HCT116 (cell line): ENCODE measurements at regions of chr9 and their contacts with region 1.

Region 1: DNA sequence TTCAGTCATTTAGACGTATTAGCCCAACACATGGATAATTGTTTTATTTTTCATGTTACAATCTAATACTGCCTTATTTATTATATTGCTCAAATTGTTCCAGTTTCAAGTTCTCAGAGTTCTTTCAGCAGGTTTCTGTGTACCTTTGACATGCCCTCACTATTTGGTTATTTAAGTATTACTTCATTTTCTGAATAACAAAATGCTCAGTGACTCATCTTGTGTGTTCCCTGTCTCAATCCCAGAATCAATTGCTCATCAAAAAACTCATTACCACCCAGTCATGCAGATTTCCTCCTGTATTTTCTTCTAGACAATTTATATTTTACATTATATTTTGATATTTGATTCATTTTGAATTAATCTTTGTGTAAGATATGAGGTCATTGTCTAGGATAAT is 562.6 kb downstream of the ANXA1 start:
- DNase-seq: no peak
- ATAC-seq: no peak
- H3K4me3 ChIP-seq: no peak overlapping the region
- H3K27ac ChIP-seq: no peak overlapping the region
- H3K4me1 ChIP-seq: no peaks in the 10 kb centered on the region
- H3K27me3 ChIP-seq: no peaks in the 10 kb centered on the region
- CTCF ChIP-seq: no peak
- POLR2A ChIP-seq: no peak
- RAD21 ChIP-seq: no peak

Region 2: GRCh38 chr9:73558471-73558870 is 155.8 kb before region 1 on chr9:
- CTCF ChIA-PET with region 1: no interaction called
- POLR2A ChIA-PET with region 1: no interaction called
- RAD21 ChIA-PET with region 1: no interaction called
- intact Hi-C with region 1: no loop called
- DNase-seq: no peak
- ATAC-seq: no peak
- H3K4me3 ChIP-seq: no peak overlapping the region
- H3K27ac ChIP-seq: no peak overlapping the region
- H3K4me1 ChIP-seq: no peaks in the 10 kb centered on the region
- H3K27me3 ChIP-seq: no peaks in the 10 kb centered on the region
- CTCF ChIP-seq: no peak
- POLR2A ChIP-seq: no peak
- RAD21 ChIP-seq: no peak

Region 3: DNA sequence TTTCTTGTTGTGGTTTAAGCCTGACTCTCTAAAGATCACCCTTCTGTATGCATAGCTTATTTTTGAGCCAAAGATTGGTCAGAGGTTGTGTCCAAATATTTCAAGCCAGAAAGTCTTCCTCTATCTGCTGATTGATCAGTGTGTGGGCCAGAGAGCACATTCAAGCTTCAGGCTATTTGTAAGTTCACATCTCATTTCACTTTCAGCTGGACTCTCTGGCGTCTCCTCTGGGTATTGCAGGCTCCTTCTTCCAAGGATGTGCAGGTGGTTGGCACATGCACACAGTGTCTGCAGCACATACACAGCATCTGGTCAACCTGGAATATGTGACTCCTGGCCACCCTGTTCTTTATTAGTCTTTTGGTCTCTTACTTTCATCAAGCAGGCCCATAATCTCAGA is 46.6 kb before region 1 on chr9:
- CTCF ChIA-PET with region 1: no interaction called
- POLR2A ChIA-PET with region 1: no interaction called
- RAD21 ChIA-PET with region 1: no interaction called
- intact Hi-C with region 1: loop called (anchors 10 kb)
- DNase-seq: no peak
- ATAC-seq: peak; percentile 79
- H3K4me3 ChIP-seq: no peak overlapping the region
- H3K27ac ChIP-seq: no peak overlapping the region
- H3K4me1 ChIP-seq: no peaks in the 10 kb centered on the region
- H3K27me3 ChIP-seq: peaks cover 16% of the 10 kb centered on the region
- CTCF ChIP-seq: peak in 2 of 3 experiments; percentile 31 to 35; a peak in 2 of 6 replicates
- POLR2A ChIP-seq: no peak
- RAD21 ChIP-seq: no peak